IMR-90 (cell line): ENCODE measurements at regions of chr3 and their contacts with region 1.

Region 1: DNA sequence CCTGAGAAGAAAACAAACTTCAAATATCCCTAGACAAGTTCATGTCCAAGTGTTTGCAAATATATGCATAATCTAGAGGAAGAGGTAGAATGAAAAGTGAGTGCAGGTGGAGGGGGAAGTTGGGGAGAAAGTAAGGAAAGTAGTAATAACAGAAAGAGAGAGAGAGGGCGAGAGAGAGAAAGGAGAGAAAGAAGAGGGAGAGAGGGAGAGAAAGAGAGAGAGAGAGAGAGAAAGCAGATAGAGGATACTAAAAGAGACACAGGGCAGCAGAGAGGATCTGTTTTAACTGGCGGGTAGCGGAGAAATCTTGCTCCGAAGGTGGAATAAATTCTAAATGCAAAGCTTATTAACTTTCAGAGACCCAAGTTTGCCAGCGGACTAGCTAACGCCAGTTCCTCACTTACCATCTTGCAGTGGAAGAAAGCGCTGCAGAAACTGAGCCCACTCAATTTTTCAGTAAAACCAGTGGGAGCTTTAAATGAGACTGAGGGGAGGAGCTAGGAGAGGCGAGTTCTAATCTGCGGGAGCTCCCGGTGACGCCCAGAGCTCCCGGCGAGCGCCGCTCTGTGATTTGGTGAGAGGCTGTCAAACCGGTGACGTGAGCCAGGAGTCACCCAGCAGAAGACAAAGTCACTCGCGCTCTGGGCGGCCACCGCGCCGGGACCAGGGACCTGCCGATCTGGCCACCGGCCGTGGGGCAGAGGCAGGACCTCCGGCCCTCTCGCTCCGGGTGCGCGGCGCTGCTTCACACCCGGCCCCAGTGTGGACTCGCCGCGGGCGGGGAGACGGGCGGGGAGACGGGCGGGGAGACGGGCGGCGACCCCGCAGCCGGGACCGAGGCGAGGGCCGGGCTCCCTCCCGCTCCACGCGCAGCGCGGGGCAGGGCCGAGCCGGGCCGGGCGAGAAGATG is at the start of gene GMNC:
- DNase-seq: peak; percentile 48
- ATAC-seq: peak; percentile 100
- H3K4me3 ChIP-seq: peak within 1 kb of the TSS; percentile 69
- H3K27ac ChIP-seq: no peak within 1 kb of the TSS
- H3K4me1 ChIP-seq: no peaks in the 10 kb centered on the region
- H3K27me3 ChIP-seq: peaks cover 4% of the 10 kb centered on the region
- CTCF ChIP-seq: no peak
- POLR2A ChIP-seq: no peak
- RAD21 ChIP-seq: no peak
- total RNA-seq, gene GMNC: 0.18 and 0.28 TPM in 2 replicates

Region 2: DNA sequence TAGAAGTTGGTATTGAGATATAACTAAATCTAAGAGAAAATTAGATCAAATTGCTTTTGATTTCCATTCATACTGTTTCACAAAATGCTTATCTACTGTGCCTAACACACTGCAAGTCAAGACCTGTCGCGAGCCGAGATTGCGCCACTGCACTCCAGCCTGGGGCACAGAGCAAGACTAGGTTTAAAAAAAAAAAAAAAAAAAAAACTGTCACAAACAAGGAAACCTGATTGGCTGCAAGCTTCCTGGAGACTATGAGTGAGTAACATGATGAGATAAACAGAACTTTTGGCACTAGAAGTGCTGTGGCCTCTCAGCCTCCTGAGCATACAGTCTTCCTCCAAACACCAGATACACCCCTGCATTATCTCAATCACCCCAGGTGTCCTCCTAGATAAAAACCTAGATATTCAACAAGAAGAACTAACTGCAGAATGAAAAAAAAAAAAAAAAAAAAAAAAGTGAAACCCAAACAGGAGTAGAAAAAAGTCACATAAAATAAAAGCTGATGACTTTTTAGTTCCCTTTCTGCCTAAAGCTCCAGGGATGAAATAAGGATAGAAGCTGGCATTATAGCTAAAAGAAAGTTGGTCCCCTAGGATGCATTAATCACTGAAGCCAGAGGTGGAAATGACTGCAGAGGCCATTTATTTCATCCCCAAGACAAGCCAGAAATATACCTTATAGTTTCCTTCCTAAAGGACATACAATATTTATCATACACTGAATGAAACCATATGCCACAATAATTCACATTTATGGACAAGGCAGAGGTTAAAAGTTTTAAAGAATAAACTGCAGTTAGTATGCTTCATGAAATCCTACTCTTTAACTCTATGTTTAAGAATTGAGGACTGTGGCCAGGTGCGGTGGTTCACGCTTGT is 824.2 kb before region 1 on chr3:
- CTCF ChIA-PET with region 1: no interaction called
- POLR2A ChIA-PET with region 1: no interaction called
- dilution Hi-C with region 1: no loop called
- in situ Hi-C with region 1: no loop called
- intact Hi-C with region 1: no loop called
- DNase-seq: peak; percentile 88
- ATAC-seq: peak; percentile 78
- H3K4me3 ChIP-seq: no peak overlapping the region
- H3K27ac ChIP-seq: no peak overlapping the region
- H3K4me1 ChIP-seq: peaks cover 6% of the 10 kb centered on the region; the same call in 1 of the 2 replicates
- H3K27me3 ChIP-seq: no peaks in the 10 kb centered on the region
- CTCF ChIP-seq: no peak
- POLR2A ChIP-seq: no peak
- RAD21 ChIP-seq: no peak

Region 3: GRCh38 chr3:190485830-190486532 is 376.5 kb before region 1 on chr3:
- CTCF ChIA-PET with region 1: no interaction called
- POLR2A ChIA-PET with region 1: no interaction called
- dilution Hi-C with region 1: no loop called
- in situ Hi-C with region 1: no loop called
- intact Hi-C with region 1: no loop called
- DNase-seq: no peak
- ATAC-seq: peak; percentile 11; the same call in 1 of the 2 replicates
- H3K4me3 ChIP-seq: no peak overlapping the region
- H3K27ac ChIP-seq: no peak overlapping the region
- H3K4me1 ChIP-seq: no peaks in the 10 kb centered on the region
- H3K27me3 ChIP-seq: peaks cover 2% of the 10 kb centered on the region; the same call in 1 of the 2 replicates
- CTCF ChIP-seq: no peak
- POLR2A ChIP-seq: no peak
- RAD21 ChIP-seq: no peak

Region 4: GRCh38 chr3:190533511-190534277 is 328.8 kb before region 1 on chr3:
- CTCF ChIA-PET with region 1: no interaction called
- POLR2A ChIA-PET with region 1: interaction called, 11 read pairs
- dilution Hi-C with region 1: no loop called
- in situ Hi-C with region 1: no loop called
- intact Hi-C with region 1: no loop called
- DNase-seq: peak; percentile 93
- ATAC-seq: peak; percentile 85
- H3K4me3 ChIP-seq: no peak overlapping the region
- H3K27ac ChIP-seq: peak overlapping the region; percentile 97
- H3K4me1 ChIP-seq: peaks cover 10% of the 10 kb centered on the region
- H3K27me3 ChIP-seq: no peaks in the 10 kb centered on the region
- CTCF ChIP-seq: no peak
- POLR2A ChIP-seq: no peak
- RAD21 ChIP-seq: no peak